Activated CD4-positive, alpha-beta T cell treated with anti-CD3 and anti-CD28 coated beads, Interleukin-2, amount 10 ng/mL, durations not matched to agents 24 days and 14 days (primary cell): ENCODE measurements at regions of chr5 and their contacts with region 1.

Region 1: GRCh38 chr5:139197710-139198669 is at the start of gene SIL1:
- DNase-seq: peak; percentile 98
- H3K4me3 Mint-ChIP-seq: peak within 1 kb of the TSS; percentile 93
- H3K27ac Mint-ChIP-seq: peak within 1 kb of the TSS; percentile 89
- H3K4me1 Mint-ChIP-seq: peaks cover 21% of the 10 kb centered on the region
- H3K27me3 Mint-ChIP-seq: no peaks in the 10 kb centered on the region
- total RNA-seq, gene SIL1: 31.1 and 40.5 TPM in 2 replicates

Region 2: DNA sequence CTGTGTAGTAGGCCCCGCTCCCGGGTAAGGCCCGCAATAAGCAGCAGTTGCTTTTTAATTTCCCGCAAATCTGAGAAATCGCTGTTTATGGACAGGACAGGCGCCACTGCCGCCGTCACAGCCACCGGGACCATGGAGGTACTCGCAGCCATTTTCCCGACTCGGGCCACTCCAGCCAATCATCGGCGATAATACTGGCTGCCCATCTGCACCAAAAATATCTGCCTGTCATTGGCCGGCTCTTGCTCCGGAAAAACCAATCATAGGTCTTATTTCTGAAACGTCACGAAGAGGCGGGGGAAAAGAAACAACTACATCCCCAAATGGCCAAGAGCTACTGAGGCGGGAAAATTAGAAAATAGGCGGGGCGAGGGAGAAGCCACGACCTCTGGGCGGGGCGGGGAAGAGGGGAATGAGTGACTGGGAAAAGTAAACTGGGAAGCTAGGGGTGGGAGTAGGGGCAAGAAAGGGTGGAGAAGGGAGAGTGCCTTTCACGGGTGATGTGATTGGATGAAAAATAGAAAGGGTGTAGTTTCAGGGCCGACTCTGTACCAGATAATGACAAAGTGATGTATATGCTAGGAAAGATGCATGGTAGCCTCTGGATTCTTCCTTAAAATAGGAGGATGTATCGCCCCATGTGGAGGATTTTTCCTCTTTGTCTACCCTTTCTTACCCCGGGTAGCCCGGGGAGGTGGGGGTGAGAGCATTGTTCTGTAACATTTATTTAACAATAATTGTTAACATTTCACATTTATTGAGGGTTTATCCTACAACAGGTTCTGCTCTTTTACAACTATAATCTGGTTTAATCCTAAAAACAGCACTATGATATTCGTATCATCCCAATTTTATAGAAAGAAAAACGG is 984.6 kb before region 1 on chr5 and contains the start of gene CDC23:
- intact Hi-C with region 1: loop called (anchors 5 kb)
- DNase-seq: peak; percentile 98
- H3K4me3 Mint-ChIP-seq: peak within 1 kb of the TSS; percentile 97
- H3K27ac Mint-ChIP-seq: peak within 1 kb of the TSS; percentile 96
- H3K4me1 Mint-ChIP-seq: peaks cover 14% of the 10 kb centered on the region
- H3K27me3 Mint-ChIP-seq: no peaks in the 10 kb centered on the region
- total RNA-seq, gene CDC23: 46.6 and 47.9 TPM in 2 replicates

Region 3: DNA sequence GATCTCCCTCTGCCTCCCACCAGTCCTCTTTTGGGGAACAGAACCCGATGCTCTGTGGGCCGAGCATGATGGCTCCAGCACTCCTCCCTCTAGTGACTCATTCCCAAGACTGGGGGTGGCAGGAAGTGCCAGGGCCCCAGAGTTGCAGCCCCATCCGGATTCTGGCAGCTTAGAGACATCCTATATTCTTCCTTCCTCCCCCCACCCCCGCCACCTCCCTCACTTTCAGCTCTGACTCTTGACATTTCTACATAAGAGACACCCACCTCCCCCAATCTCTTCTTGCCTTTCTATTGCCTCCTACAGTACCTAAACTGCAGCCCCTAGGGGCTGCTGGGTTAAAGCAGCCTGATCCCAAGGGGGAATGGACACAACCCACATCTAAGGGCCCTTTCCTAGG is 48.4 kb after region 1 on chr5:
- intact Hi-C with region 1: loop called (anchors 5 kb)
- DNase-seq: peak; percentile 72
- H3K4me3 Mint-ChIP-seq: peak overlapping the region; percentile 71
- H3K27ac Mint-ChIP-seq: peak overlapping the region; percentile 91
- H3K4me1 Mint-ChIP-seq: peaks cover 26% of the 10 kb centered on the region
- H3K27me3 Mint-ChIP-seq: peaks cover 5% of the 10 kb centered on the region

Region 4: GRCh38 chr5:139273572-139274289 is 75.7 kb after region 1 on chr5:
- intact Hi-C with region 1: loop called (anchors 5 kb)
- DNase-seq: peak; percentile 97
- H3K4me3 Mint-ChIP-seq: peak overlapping the region; percentile 97
- H3K27ac Mint-ChIP-seq: peak overlapping the region; percentile 94
- H3K4me1 Mint-ChIP-seq: peaks cover 42% of the 10 kb centered on the region
- H3K27me3 Mint-ChIP-seq: peaks cover 2% of the 10 kb centered on the region